ENCODE measurements at regions of chr2 and their contacts with region 1.

Region 1: GRCh38 chr2:20650880-20651730 is at the start of gene HS1BP3:
- DNase-seq: peak; percentile 88 to 98 (median 94)
- H3K4me3 ChIP-seq: peak within 1 kb of the TSS; percentile 50 to 87
- H3K4me3 Mint-ChIP-seq: peak within 1 kb of the TSS; percentile 87 to 93 (median 90)
- H3K27ac ChIP-seq: peak within 1 kb of the TSS; percentile 89
- H3K27ac Mint-ChIP-seq: peak within 1 kb of the TSS; percentile 92 to 98 (median 97)
- H3K4me1 ChIP-seq: peaks cover 20% of the 10 kb centered on the region
- H3K4me1 Mint-ChIP-seq: peaks cover 22 to 42% (median 36%) of the 10 kb centered on the region in 4 donors
- H3K27me3 ChIP-seq: no peaks in the 10 kb centered on the region
- H3K27me3 Mint-ChIP-seq: no peaks in the 10 kb centered on the region
- total RNA-seq, gene HS1BP3: 20.1 TPM

Region 2: GRCh38 chr2:19901442-19902215 is 749.5 kb before region 1 on chr2 and contains the start of gene TTC32:
- CTCF ChIA-PET with region 1: no interaction called
- POLR2A ChIA-PET with region 1: interaction called, 5 read pairs
- intact Hi-C with region 1: loop called (anchors 2 kb)
- DNase-seq: peak; percentile 95 to 98 (median 97)
- H3K4me3 ChIP-seq: peak within 1 kb of the TSS; percentile 59 to 63
- H3K4me3 Mint-ChIP-seq: peak within 1 kb of the TSS; percentile 92 to 99 (median 96)
- H3K27ac ChIP-seq: peak within 1 kb of the TSS; percentile 92
- H3K27ac Mint-ChIP-seq: peak within 1 kb of the TSS; percentile 87 to 100 (median 98)
- H3K4me1 ChIP-seq: peaks cover 37% of the 10 kb centered on the region
- H3K4me1 Mint-ChIP-seq: peaks cover 18 to 45% (median 29%) of the 10 kb centered on the region in 4 donors
- H3K27me3 ChIP-seq: no peaks in the 10 kb centered on the region
- H3K27me3 Mint-ChIP-seq: no peaks in the 10 kb centered on the region
- total RNA-seq, gene TTC32: 44.4 to 48.7 TPM

Region 3: GRCh38 chr2:20411361-20411894 is 239.7 kb before region 1 on chr2:
- CTCF ChIA-PET with region 1: interaction called, 22 read pairs
- POLR2A ChIA-PET with region 1: interaction called, 5 read pairs
- intact Hi-C with region 1: loop called (anchors 2 kb)
- DNase-seq: peak; percentile 55 to 63 (median 59)
- H3K4me3 ChIP-seq: no peak overlapping the region
- H3K4me3 Mint-ChIP-seq: no peak overlapping the region
- H3K27ac ChIP-seq: no peak overlapping the region
- H3K27ac Mint-ChIP-seq: peak overlapping the region in 2 of 7 donors; percentile 13 to 71
- H3K4me1 ChIP-seq: no peaks in the 10 kb centered on the region
- H3K4me1 Mint-ChIP-seq: peaks cover 0 to 2% (median under 1%) of the 10 kb centered on the region in 4 donors
- H3K27me3 ChIP-seq: no peaks in the 10 kb centered on the region
- H3K27me3 Mint-ChIP-seq: peaks cover 3 to 12% of the 10 kb centered on the region in 2 donors

Region 4: GRCh38 chr2:20578895-20579825 is 71.9 kb before region 1 on chr2:
- CTCF ChIA-PET with region 1: interaction called, 12 read pairs
- POLR2A ChIA-PET with region 1: interaction called, 8 read pairs
- intact Hi-C with region 1: loop called (anchors 1 kb)
- DNase-seq: no peak
- H3K4me3 ChIP-seq: no peak overlapping the region
- H3K4me3 Mint-ChIP-seq: no peak overlapping the region
- H3K27ac ChIP-seq: no peak overlapping the region
- H3K27ac Mint-ChIP-seq: no peak overlapping the region
- H3K4me1 ChIP-seq: peaks cover 18% of the 10 kb centered on the region
- H3K4me1 Mint-ChIP-seq: peaks cover 13 to 17% (median 15%) of the 10 kb centered on the region in 4 donors
- H3K27me3 ChIP-seq: no peaks in the 10 kb centered on the region
- H3K27me3 Mint-ChIP-seq: no peaks in the 10 kb centered on the region

Region 5: GRCh38 chr2:20822535-20823490 is 171.7 kb after region 1 on chr2 and contains the start of gene LDAH:
- CTCF ChIA-PET with region 1: interaction called, 5 read pairs
- POLR2A ChIA-PET with region 1: interaction called, 32 read pairs
- intact Hi-C with region 1: loop called (anchors 5 kb)
- DNase-seq: peak; percentile 79 to 84 (median 82)
- H3K4me3 ChIP-seq: peak within 1 kb of the TSS; percentile 81 to 85
- H3K4me3 Mint-ChIP-seq: peak within 1 kb of the TSS; percentile 93 to 99 (median 98)
- H3K27ac ChIP-seq: peak within 1 kb of the TSS; percentile 83
- H3K27ac Mint-ChIP-seq: peak within 1 kb of the TSS; percentile 97 to 100 (median 98)
- H3K4me1 ChIP-seq: peaks cover 3% of the 10 kb centered on the region
- H3K4me1 Mint-ChIP-seq: peaks cover 15 to 36% (median 26%) of the 10 kb centered on the region in 4 donors
- H3K27me3 ChIP-seq: no peaks in the 10 kb centered on the region
- H3K27me3 Mint-ChIP-seq: no peaks in the 10 kb centered on the region
- total RNA-seq, gene LDAH: 22.7 to 23.9 TPM

Measured in CD4-positive, alpha-beta memory T cell (primary cell).